Tibial artery (tissue), 4 donors: ENCODE measurements at regions of chr4 and their contacts with region 1.

Region 1: GRCh38 chr4:156475322-156475721 is 496.3 kb downstream of the PDGFC start:
- DNase-seq: no peak
- H3K4me3 ChIP-seq: no peak overlapping the region
- H3K27ac ChIP-seq: peak overlapping the region; percentile 52 to 55
- H3K4me1 ChIP-seq: peaks cover 0 to 13% (median 2%) of the 10 kb centered on the region in 4 donors
- H3K27me3 ChIP-seq: no peaks in the 10 kb centered on the region
- CTCF ChIP-seq: peak; percentile 64 to 70

Region 2: GRCh38 chr4:156195914-156196313 is 279.4 kb before region 1 on chr4:
- intact Hi-C with region 1: no loop called
- DNase-seq: no peak
- H3K4me3 ChIP-seq: no peak overlapping the region
- H3K27ac ChIP-seq: no peak overlapping the region
- H3K4me1 ChIP-seq: no peaks in the 10 kb centered on the region
- H3K27me3 ChIP-seq: no peaks in the 10 kb centered on the region
- CTCF ChIP-seq: no peak

Region 3: GRCh38 chr4:156439576-156440200 is 35.6 kb before region 1 on chr4:
- intact Hi-C with region 1: no loop called
- DNase-seq: no peak
- H3K4me3 ChIP-seq: no peak overlapping the region
- H3K27ac ChIP-seq: no peak overlapping the region
- H3K4me1 ChIP-seq: no peaks in the 10 kb centered on the region
- H3K27me3 ChIP-seq: no peaks in the 10 kb centered on the region
- CTCF ChIP-seq: no peak

Region 4: GRCh38 chr4:156575430-156576073 is 100.2 kb after region 1 on chr4:
- intact Hi-C with region 1: no loop called
- DNase-seq: no peak
- H3K4me3 ChIP-seq: no peak overlapping the region
- H3K27ac ChIP-seq: peak overlapping the region; percentile 8 to 37
- H3K4me1 ChIP-seq: peaks cover 0 to 25% (median 3%) of the 10 kb centered on the region in 4 donors
- H3K27me3 ChIP-seq: no peaks in the 10 kb centered on the region
- CTCF ChIP-seq: no peak

Region 5: DNA sequence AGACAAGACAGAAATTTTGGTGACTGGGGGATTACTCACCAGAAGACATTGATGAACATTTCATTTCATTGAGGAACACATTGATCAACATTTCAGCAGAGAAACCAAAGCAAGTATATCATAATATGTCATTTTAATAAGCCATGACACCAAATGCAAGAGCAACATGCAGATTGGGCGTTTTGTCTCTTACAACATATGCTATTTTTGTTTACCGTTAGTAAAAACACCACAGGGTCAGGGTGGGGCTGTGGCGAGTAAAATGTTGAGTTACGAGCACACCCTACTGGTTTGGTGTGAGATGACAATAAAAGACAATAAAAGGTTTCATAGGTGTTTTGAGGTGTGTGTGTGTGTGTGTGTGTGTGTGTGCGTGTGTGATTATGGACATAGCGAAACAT is 201.8 kb after region 1 on chr4:
- intact Hi-C with region 1: no loop called
- DNase-seq: no peak
- H3K4me3 ChIP-seq: no peak overlapping the region
- H3K27ac ChIP-seq: no peak overlapping the region
- H3K4me1 ChIP-seq: peaks cover 0 to 15% (median 0%) of the 10 kb centered on the region in 4 donors
- H3K27me3 ChIP-seq: no peaks in the 10 kb centered on the region
- CTCF ChIP-seq: no peak

Region 6: DNA sequence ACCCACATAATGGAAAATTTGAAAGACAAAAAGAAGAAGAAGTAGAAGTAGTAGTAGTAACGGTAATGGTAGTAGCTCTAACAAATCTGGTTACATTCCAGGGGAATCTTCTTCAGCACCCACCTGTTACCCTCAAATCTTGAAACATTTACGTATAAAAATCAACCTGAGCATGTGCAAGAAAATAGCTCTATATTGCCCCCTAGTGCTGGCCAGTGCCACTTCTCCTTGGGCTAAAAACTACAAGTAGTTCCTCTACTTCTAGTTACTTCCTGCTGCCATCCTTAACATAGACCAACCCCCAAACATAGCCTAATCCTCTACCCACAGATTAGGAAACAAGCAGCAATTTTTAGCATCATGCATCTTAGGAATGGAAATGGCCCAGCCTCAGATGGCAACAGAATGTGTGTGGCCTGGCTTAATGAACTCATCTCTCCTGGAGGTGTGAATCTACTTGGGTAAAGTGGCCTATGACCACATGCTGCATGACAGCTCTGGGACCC is 493.2 kb after region 1 on chr4:
- intact Hi-C with region 1: loop called (anchors 2 kb)
- DNase-seq: peak; percentile 73 to 79
- H3K4me3 ChIP-seq: peak overlapping the region; percentile 74 to 89
- H3K27ac ChIP-seq: peak overlapping the region; percentile 98 to 99
- H3K4me1 ChIP-seq: peaks cover 0 to 64% (median 11%) of the 10 kb centered on the region in 4 donors
- H3K27me3 ChIP-seq: no peaks in the 10 kb centered on the region
- CTCF ChIP-seq: peak; percentile 80 to 87

Region 7: GRCh38 chr4:157045507-157046127 is 570.3 kb after region 1 on chr4:
- intact Hi-C with region 1: loop called (anchors 5 kb)
- DNase-seq: no peak
- H3K4me3 ChIP-seq: no peak overlapping the region
- H3K27ac ChIP-seq: no peak overlapping the region
- H3K4me1 ChIP-seq: peaks cover 0 to 3% (median 0%) of the 10 kb centered on the region in 4 donors
- H3K27me3 ChIP-seq: no peaks in the 10 kb centered on the region
- CTCF ChIP-seq: peak; percentile 73 to 82